ENCODE measurements at regions of chr2 and their contacts with region 1.

Region 1: GRCh38 chr2:7044261-7045250 is 127.3 kb downstream of the RNF144A start:
- DNase-seq: peak; percentile 37
- ATAC-seq: peak; percentile 86
- H3K4me3 ChIP-seq: no peak overlapping the region
- H3K27ac ChIP-seq: no peak overlapping the region
- H3K4me1 ChIP-seq: no peaks in the 10 kb centered on the region
- H3K27me3 ChIP-seq: no peaks in the 10 kb centered on the region
- CTCF ChIP-seq: peak; percentile 59
- POLR2A ChIP-seq: no peak
- RAD21 ChIP-seq: peak; percentile 39

Region 2: DNA sequence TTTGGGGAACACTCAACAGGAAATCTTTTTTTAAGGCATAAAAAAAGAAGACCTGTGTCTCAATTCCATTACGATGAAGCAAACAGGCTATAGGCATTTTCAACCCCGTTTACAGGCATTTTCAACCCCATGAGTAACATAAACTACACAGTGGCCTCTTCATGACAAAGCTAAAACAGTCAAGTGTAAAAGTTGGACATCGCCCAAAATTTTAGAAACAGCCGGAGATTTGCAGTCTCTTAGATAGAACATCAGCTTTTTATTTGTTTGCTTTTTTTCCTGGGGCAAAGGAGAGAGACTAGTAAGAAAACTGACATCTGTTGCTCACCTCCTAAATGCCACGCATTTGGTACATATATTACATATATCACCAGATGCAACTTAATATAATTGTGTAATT is 352.5 kb before region 1 on chr2:
- CTCF ChIA-PET with region 1: no interaction called
- POLR2A ChIA-PET with region 1: no interaction called
- dilution Hi-C with region 1: no loop called
- in situ Hi-C with region 1: no loop called
- intact Hi-C with region 1: no loop called
- DNase-seq: no peak
- ATAC-seq: peak; percentile 24; the same call in 1 of the 2 replicates
- H3K4me3 ChIP-seq: no peak overlapping the region
- H3K27ac ChIP-seq: no peak overlapping the region
- H3K4me1 ChIP-seq: no peaks in the 10 kb centered on the region
- H3K27me3 ChIP-seq: no peaks in the 10 kb centered on the region
- CTCF ChIP-seq: no peak
- POLR2A ChIP-seq: no peak
- RAD21 ChIP-seq: no peak

Region 3: DNA sequence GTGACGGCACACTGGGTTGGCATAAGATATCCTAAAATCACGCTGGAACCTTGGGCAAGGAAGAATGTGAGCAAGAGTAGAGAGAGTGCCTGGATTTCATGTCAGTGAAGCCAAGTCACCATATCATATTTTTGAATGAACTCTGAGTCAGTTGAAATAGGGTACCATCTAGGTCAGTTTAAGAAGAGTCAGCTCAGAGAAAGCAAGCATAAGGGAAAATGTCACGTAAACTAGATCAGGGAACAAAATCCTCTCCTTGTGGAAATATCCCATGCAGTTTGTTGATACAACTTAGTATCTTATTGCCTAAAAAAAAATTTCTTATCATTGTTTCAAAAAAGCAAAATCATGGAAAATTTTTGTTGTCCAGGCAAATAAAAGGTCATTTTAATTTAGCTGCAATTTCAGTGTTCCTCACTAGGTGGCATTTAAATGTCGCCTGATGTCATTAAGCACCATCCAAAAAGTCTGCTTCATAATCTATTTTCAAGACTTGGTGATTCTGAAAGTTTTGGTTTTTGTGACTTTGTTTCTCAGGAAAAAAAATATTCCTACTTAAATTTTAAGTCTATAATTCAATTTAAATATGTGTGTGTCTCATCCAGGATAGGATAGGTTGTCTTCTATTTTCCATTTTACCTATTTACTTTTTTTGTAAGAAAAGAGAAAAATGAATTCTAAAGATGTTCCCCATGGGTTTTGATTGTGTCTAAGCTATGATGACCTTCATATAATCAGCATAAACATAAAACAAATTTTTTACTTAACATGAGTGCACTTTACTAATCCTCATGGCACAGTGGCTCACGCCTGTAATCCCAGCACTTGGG is 147.4 kb before region 1 on chr2:
- CTCF ChIA-PET with region 1: interaction called, 4 read pairs
- POLR2A ChIA-PET with region 1: no interaction called
- dilution Hi-C with region 1: no loop called
- in situ Hi-C with region 1: no loop called
- intact Hi-C with region 1: loop called (anchors 1 kb)
- DNase-seq: peak; percentile 10
- ATAC-seq: no peak
- H3K4me3 ChIP-seq: no peak overlapping the region
- H3K27ac ChIP-seq: no peak overlapping the region
- H3K4me1 ChIP-seq: no peaks in the 10 kb centered on the region
- H3K27me3 ChIP-seq: no peaks in the 10 kb centered on the region
- CTCF ChIP-seq: peak; percentile 40
- POLR2A ChIP-seq: no peak
- RAD21 ChIP-seq: 0 out of 2 replicates have a peak, but pooled peaks have one; percentile 27

Region 4: GRCh38 chr2:6917071-6917760 is 127.3 kb before region 1 on chr2 and contains the start of gene RNF144A:
- CTCF ChIA-PET with region 1: interaction called, 3 read pairs
- POLR2A ChIA-PET with region 1: no interaction called
- dilution Hi-C with region 1: no loop called
- in situ Hi-C with region 1: no loop called
- intact Hi-C with region 1: loop called (anchors 5 kb)
- DNase-seq: peak; percentile 12
- ATAC-seq: peak; percentile 99
- H3K4me3 ChIP-seq: peak within 1 kb of the TSS; percentile 58
- H3K27ac ChIP-seq: no peak within 1 kb of the TSS
- H3K4me1 ChIP-seq: no peaks in the 10 kb centered on the region
- H3K27me3 ChIP-seq: peaks cover 15% of the 10 kb centered on the region
- CTCF ChIP-seq: peak; percentile 41
- POLR2A ChIP-seq: no peak
- RAD21 ChIP-seq: no peak
- total RNA-seq, gene RNF144A: 0.18 and 0.28 TPM in 2 replicates